Activated naive CD4-positive, alpha-beta T cell treated with anti-CD3 and anti-CD28 coated beads for 36 hours (primary cell): ENCODE measurements at regions of chr1 and their contacts with region 1.

Region 1: DNA sequence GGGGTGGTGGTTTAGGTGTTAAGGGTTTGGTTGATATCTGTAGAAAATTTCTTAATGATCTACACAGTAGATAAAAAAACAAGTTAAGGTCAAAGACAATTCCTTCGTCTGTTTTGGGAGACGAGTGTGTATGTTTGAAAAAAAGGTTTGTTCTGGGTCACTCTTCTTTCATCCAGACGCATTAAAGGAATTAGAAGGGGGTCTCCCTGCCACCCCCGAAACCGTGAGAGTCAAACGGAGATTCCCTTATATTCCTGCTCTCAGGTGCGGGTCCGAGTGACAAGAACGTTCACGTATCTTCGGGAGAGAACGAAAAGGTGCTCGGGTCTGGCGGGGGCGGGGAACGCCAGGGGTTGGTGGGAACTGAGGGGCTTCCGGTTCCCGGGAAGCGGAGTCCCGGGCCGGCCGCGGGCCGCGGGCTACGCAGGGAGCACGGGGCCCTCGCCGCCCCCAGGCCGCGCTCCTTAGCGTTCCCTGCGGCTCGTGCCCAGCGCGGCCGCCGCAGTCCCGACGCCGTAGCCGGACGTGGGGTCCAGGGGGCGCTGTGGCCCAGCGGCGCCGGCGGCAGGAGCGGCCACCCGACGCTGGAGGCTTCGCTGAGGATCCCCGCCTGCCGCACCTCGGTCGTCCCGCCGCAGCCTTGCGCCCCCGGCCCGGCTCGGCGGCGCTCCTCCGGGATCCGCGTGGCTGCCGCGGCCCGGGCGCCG is at the start of gene ZFYVE9:
- DNase-seq: peak; percentile 66
- H3K4me3 Mint-ChIP-seq: peak within 1 kb of the TSS; percentile 84
- H3K27ac Mint-ChIP-seq: peak within 1 kb of the TSS; percentile 68
- H3K4me1 Mint-ChIP-seq: peaks cover 40% of the 10 kb centered on the region
- H3K27me3 Mint-ChIP-seq: no peaks in the 10 kb centered on the region
- total RNA-seq, gene ZFYVE9: 3.0 to 3.5 TPM

Region 2: DNA sequence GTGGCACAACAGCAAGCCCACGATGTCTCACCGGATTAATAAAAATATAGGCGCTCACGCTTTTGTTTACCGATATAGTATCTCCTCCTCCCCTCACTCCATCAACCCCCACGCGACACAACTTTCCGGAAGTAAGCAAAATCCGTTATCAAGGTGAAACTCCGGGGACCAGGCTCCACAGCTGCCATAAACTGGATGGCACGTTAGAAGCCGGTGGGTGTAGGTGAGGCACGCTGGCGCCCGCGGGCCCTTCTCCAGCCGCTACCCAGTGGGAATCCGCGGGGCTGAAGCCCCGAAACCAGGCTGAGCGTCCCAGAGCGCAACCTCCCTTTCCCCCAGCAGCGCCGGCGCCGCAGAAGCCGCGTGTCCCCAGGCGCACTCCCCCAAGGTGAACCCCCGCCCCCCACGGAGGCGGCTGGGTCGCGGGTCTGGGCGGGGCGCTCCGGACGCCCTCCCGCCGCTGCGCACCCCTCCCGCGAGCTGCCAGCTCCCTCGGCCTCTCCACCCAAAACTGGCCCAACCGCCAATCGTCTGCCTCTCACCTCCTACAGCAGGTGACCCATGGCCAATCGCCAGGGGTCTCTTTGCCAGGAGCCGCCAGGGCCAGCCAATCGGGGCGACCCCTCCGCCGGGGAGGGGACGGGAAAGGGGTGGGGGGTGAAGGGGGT is 412.4 kb before region 1 on chr1:
- CTCF ChIA-PET with region 1: no interaction called
- intact Hi-C with region 1: loop called (anchors 5 kb)
- DNase-seq: peak; percentile 97
- H3K4me3 Mint-ChIP-seq: peak overlapping the region; percentile 87
- H3K27ac Mint-ChIP-seq: peak overlapping the region; percentile 87
- H3K4me1 Mint-ChIP-seq: peaks cover 33% of the 10 kb centered on the region
- H3K27me3 Mint-ChIP-seq: no peaks in the 10 kb centered on the region

Region 3: DNA sequence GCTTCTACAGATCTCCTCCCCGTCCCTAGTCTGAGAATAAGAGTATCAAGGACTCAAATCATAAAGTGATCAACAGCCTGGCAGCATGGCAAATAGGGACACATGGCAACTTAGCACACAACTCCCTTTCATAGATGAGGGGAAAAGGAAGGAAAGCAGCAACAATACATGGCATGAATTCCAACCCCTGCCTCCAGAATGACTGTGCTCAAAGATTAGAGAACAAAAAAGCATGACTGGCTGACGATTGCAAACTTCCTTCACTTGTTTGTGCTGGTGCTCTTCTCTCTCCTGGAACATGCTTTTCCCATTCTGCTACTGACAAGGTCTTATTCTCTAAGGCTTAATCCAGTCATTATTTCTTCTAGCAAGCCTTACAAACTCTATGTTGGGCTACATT is 119.5 kb before region 1 on chr1:
- CTCF ChIA-PET with region 1: no interaction called
- intact Hi-C with region 1: no loop called
- DNase-seq: no peak
- H3K4me3 Mint-ChIP-seq: no peak overlapping the region
- H3K27ac Mint-ChIP-seq: no peak overlapping the region
- H3K4me1 Mint-ChIP-seq: no peaks in the 10 kb centered on the region
- H3K27me3 Mint-ChIP-seq: no peaks in the 10 kb centered on the region

Region 4: DNA sequence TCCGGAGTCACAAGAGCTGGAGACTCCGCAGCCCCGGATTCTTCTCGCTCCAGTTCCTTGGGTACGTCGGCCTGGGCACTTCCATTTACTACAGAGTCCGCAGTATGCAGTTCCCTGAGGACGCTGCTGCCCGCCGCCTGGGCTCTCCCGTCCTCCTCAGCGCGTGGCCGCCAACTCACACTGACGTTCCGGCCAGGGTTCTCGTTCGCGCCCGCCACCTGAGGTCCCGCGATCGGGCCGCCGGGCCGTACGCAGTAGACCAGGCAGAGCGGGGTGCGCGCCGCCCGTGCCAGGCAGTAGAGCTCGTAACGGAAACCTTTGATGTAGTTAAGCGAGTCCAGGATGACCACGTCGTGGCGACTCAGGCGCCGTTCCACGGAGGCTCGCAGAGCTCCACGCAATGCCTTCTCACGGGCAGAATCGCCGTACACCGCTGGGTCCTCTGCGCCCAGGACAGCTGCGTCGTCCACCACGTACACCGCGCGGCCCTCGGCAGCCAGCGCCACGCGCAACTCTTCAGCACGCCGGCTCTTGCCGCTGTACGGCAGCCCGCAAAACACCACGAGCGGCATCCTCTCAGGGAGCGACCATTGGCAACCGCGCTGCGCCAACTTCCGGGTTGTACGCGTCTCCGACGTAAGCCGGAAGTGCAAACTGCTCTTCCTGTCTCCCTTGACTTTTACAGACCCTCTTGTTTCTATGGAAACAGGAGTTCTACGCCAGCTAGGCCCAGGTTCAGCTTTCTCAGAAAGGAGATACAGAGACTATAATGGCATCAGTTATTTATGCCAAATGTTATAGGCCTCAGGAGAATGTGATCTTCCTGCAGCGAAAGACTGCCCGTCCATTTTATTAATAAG is 108.2 kb before region 1 on chr1 and contains the start of gene KTI12:
- CTCF ChIA-PET with region 1: no interaction called
- intact Hi-C with region 1: loop called (anchors 2 kb)
- DNase-seq: peak; percentile 93
- H3K4me3 Mint-ChIP-seq: peak within 1 kb of the TSS; percentile 90
- H3K27ac Mint-ChIP-seq: peak within 1 kb of the TSS; percentile 80
- H3K4me1 Mint-ChIP-seq: peaks cover 29% of the 10 kb centered on the region
- H3K27me3 Mint-ChIP-seq: no peaks in the 10 kb centered on the region
- total RNA-seq, gene KTI12: 7.3 to 7.6 TPM

Region 5: GRCh38 chr1:52127181-52128180 is 14.2 kb before region 1 on chr1:
- CTCF ChIA-PET with region 1: interaction called, 10 read pairs
- intact Hi-C with region 1: no loop called
- DNase-seq: peak; percentile 59
- H3K4me3 Mint-ChIP-seq: no peak overlapping the region
- H3K27ac Mint-ChIP-seq: no peak overlapping the region
- H3K4me1 Mint-ChIP-seq: peaks cover 16% of the 10 kb centered on the region
- H3K27me3 Mint-ChIP-seq: peaks cover 11% of the 10 kb centered on the region

Region 6: DNA sequence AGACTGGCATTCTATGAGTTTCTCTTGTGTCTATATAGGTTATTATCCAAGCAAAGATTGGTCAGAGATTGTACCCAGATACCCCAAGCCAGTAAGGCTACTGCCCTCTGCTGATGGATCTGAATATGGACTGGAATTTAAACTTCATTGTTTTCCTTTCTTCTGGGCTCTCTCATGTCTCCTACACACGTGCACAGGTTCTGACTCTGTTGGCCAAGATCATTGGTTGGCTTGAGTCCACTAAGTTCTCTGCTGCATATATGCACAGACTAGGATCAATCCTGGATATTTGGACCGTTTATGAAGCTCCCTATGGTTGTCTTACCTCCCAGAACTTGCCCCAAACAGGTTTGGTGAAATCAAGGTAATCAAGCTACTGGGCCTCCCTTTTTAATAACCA is 154.7 kb after region 1 on chr1:
- CTCF ChIA-PET with region 1: interaction called, 4 read pairs
- intact Hi-C with region 1: loop called (anchors 1 kb)
- DNase-seq: peak; percentile 13
- H3K4me3 Mint-ChIP-seq: no peak overlapping the region
- H3K27ac Mint-ChIP-seq: peak overlapping the region; percentile 39
- H3K4me1 Mint-ChIP-seq: peaks cover 2% of the 10 kb centered on the region
- H3K27me3 Mint-ChIP-seq: no peaks in the 10 kb centered on the region

Region 7: GRCh38 chr1:52636721-52637695 is 495.3 kb after region 1 on chr1:
- CTCF ChIA-PET with region 1: no interaction called
- intact Hi-C with region 1: loop called (anchors 1 kb)
- DNase-seq: peak; percentile 84
- H3K4me3 Mint-ChIP-seq: peak overlapping the region; percentile 73
- H3K27ac Mint-ChIP-seq: peak overlapping the region; percentile 98
- H3K4me1 Mint-ChIP-seq: peaks cover 79% of the 10 kb centered on the region
- H3K27me3 Mint-ChIP-seq: no peaks in the 10 kb centered on the region

Region 8: DNA sequence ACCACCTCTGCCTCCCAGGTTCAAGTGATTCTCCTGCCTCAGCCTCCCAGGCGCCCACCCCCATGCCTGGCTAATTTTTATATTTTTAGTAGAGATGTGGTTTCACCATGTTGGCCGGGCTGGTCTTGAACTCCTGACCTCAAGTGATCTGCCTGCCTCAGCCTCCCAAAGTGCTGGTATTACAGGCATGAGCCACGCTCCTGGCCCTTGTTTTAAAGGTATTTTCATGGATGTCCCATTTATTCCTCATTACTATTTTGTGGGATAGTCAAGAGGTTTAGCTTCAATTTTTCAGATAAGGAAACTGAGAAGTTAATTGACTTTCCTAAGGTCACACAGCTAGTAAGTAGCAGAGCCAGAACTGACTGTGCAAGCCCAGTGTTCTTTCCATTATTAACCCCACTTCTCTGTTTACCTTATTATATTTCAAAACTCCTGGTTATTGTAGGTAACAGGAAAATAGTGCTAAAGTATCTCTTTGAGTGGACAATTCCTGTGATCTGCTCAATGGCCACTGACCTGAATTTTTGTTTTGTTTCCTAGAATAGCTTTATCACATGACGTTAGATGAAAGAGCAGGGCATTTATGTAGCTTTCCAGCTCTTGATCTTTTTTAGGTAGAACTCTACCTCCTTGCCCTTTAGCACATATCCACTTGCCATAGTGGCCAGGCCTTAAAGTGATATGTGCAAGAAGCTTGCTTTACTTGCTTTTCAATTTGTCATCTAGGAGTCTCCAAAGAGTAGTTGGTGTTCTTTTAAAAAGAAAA is 598.2 kb after region 1 on chr1:
- CTCF ChIA-PET with region 1: no interaction called
- intact Hi-C with region 1: no loop called
- DNase-seq: no peak
- H3K4me3 Mint-ChIP-seq: no peak overlapping the region
- H3K27ac Mint-ChIP-seq: no peak overlapping the region
- H3K4me1 Mint-ChIP-seq: peaks cover 12% of the 10 kb centered on the region
- H3K27me3 Mint-ChIP-seq: no peaks in the 10 kb centered on the region